ENCODE measurements at regions of chr6 and their contacts with region 1.

Region 1: GRCh38 chr6:28252009-28252975 is at the start of gene ZKSCAN4:
- DNase-seq: peak; percentile 72
- H3K4me3 Mint-ChIP-seq: peak within 1 kb of the TSS; percentile 99
- H3K27ac Mint-ChIP-seq: peak within 1 kb of the TSS; percentile 89
- H3K4me1 Mint-ChIP-seq: peaks cover 26% of the 10 kb centered on the region
- H3K27me3 Mint-ChIP-seq: peaks cover 3% of the 10 kb centered on the region
- total RNA-seq, gene ZKSCAN4: 4.8 and 6.0 TPM in 2 replicates

Region 2: DNA sequence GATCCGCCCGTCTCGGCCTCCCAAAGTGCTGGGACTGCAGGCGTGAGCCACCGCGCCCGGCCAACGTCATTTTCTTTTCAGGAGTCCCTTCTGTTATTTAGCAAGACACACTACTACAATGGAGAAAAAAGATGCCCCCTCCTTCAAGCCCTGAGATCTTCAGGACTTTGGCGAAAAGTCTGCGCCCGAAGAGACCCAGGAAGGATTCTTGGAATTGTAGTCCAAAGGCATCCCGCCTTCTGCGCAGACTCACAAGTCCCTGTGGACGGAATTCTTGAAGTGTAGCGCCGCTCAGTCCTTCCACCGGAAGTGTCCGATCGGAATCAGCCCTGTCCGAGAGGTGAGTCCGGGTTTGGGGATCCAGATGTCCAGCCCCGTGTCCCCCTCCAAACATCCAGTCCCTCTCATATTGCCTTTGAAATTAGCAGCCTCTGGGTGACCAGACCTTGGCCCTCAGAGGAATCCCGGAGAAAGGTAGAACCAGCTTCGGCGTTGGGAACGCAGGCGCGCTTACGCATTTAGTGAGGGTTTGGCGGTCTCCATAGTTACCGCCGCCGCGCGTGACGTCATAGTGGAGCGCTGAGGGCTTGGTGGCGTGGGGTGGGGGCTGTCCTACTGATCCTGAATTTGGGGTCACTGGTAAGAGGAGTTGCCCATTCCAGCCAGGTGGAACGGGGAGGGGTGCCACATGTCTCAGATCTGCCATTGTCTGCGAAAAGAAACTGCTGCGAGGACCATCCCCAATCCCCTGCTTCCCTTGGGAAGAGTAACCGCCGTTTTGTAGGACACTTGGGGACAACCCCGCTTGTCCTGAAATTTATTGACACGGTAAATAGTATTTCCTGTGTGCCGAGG is 171.4 kb before region 1 on chr6:
- intact Hi-C with region 1: loop called (anchors 2 kb)
- DNase-seq: peak; percentile 82
- H3K4me3 Mint-ChIP-seq: peak overlapping the region; percentile 96
- H3K27ac Mint-ChIP-seq: peak overlapping the region; percentile 96
- H3K4me1 Mint-ChIP-seq: peaks cover 21% of the 10 kb centered on the region
- H3K27me3 Mint-ChIP-seq: peaks cover 2% of the 10 kb centered on the region

Region 3: GRCh38 chr6:28124102-28124970 is 128.0 kb before region 1 on chr6 and contains the start of gene ZSCAN16:
- intact Hi-C with region 1: loop called (anchors 1 kb)
- DNase-seq: peak; percentile 66
- H3K4me3 Mint-ChIP-seq: peak within 1 kb of the TSS; percentile 95
- H3K27ac Mint-ChIP-seq: peak within 1 kb of the TSS; percentile 86
- H3K4me1 Mint-ChIP-seq: peaks cover 41% of the 10 kb centered on the region
- H3K27me3 Mint-ChIP-seq: no peaks in the 10 kb centered on the region
- total RNA-seq, gene ZSCAN16: 4.8 TPM in 2 replicates

Region 4: DNA sequence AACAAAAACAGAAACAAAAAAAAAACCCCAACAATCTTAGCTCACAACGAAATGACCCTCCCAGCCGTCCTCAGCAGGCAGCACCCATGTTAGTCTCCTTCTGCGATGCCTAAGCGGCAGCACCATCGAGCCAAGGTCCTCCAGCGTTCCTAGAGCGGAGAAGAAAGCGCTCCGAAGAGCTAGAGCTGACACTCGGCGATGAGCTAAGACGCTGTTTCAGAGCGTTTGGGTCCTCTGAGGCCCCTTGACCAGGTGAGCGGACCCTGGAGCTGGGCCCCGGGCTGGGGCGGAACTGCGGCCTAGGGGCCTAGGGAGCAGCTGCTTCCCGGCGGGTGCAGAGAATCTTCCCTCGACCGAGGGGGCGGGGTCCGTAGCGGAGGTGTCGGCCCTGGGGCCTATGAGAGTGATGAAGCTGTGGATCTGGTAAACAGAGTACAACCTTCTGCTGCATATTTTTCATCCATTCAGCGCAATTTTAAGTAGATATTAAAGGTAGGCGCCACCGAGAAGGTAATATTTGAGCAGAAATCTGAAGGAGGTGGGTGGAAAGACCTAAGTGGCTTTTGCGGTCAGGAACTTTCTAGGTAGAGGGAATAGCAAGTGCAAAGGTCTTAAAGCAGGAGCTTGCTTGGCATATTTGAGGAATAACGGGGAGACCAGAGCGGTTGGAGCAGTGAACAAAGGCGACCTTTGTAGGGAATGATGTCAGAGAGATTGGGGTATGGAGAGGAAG is 14.8 kb after region 1 on chr6 and contains the start of gene ZSCAN26:
- intact Hi-C with region 1: loop called (anchors 1 kb)
- DNase-seq: peak; percentile 78
- H3K4me3 Mint-ChIP-seq: no peak within 1 kb of the TSS
- H3K27ac Mint-ChIP-seq: no peak within 1 kb of the TSS
- H3K4me1 Mint-ChIP-seq: peaks cover 9% of the 10 kb centered on the region
- H3K27me3 Mint-ChIP-seq: peaks cover 2% of the 10 kb centered on the region
- total RNA-seq, gene ZSCAN26: 5.4 and 6.0 TPM in 2 replicates

Region 5: GRCh38 chr6:28349892-28350737 is 97.8 kb after region 1 on chr6 and contains the start of gene ZKSCAN3:
- intact Hi-C with region 1: loop called (anchors 1 kb)
- DNase-seq: peak; percentile 84
- H3K4me3 Mint-ChIP-seq: peak within 1 kb of the TSS; percentile 98
- H3K27ac Mint-ChIP-seq: peak within 1 kb of the TSS; percentile 91
- H3K4me1 Mint-ChIP-seq: peaks cover 28% of the 10 kb centered on the region
- H3K27me3 Mint-ChIP-seq: peaks cover 16% of the 10 kb centered on the region
- total RNA-seq, gene ZKSCAN3: 2.9 and 3.3 TPM in 2 replicates